Activated CD8-positive, alpha-beta T cell treated with anti-CD3 and anti-CD28 coated beads, Interleukin-2, amount 10 ng/mL, durations not matched to agents 7 days and 5 days (primary cell): ENCODE measurements at regions of chr21 and their contacts with region 1.

Region 1: GRCh38 chr21:42145569-42146272 is 73.2 kb upstream of the ABCG1 start:
- DNase-seq: peak; percentile 81
- ATAC-seq: peak; percentile 71
- H3K4me3 Mint-ChIP-seq: no peak overlapping the region
- H3K27ac Mint-ChIP-seq: peak overlapping the region; percentile 67
- H3K4me1 Mint-ChIP-seq: peaks cover 10% of the 10 kb centered on the region
- H3K27me3 Mint-ChIP-seq: peaks cover 8% of the 10 kb centered on the region

Region 2: DNA sequence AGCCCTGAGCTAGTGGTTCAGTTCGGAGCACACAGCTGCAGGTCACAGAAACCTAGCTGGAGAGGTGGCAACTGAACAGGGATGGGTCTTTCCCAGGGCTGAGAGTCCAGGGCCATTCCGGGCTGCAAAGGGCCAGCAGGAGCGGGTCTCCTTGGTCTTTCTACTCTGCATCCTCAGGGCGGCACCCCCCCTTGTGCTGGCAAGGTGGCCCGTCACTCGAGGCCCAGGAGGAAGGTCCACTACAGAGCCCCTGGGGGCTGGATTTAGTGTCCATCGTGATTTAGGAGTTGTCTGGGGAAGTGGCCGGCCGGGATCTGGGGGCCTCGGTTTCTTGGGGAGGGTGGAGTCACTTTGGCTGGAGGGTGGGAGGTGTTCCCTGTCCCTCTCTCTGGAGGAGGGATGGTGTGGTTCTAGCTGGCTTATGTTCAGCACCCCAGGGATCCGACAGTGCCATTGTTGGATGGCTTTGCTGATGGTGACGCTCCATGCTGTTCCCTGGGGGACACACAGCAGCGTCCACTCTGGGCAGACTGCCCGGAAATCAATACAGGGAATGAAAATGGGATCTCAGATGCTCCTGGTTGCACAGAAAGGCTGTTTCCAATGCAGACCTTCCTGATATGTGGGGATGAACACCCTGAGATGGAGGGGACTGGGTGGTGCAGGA is 10.2 kb before region 1 on chr21:
- CTCF ChIA-PET with region 1: interaction called, 13 read pairs
- POLR2A ChIA-PET with region 1: no interaction called
- DNase-seq: no peak
- ATAC-seq: no peak
- H3K4me3 Mint-ChIP-seq: no peak overlapping the region
- H3K27ac Mint-ChIP-seq: no peak overlapping the region
- H3K4me1 Mint-ChIP-seq: no peaks in the 10 kb centered on the region
- H3K27me3 Mint-ChIP-seq: no peaks in the 10 kb centered on the region

Region 3: DNA sequence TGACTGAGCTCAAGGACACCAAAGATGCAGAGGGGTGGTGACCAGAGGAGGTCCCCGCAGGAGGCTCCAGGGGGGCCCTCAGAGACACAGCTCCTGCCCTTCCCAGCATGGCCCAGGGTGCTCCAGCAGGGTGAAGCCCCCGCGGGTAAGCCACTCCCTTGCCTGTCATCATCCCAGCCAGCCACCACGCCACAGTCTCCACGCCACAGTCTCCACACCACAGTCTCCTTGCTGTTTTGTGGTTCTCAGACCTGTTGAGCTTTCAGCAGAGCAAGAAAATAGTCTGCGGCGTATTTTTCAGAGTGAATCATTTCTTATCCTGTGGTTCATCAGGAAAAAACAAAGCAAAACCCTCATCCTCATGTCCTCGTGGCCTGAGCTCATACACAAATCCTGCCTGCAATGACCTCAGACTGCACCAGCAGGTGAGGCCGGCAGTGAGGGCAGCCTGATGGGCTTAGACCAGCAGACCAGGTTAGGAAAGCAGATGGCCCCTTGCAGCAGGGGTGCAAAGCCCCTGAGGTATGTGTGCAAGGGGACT is 47.5 kb after region 1 on chr21:
- CTCF ChIA-PET with region 1: interaction called, 22 read pairs
- POLR2A ChIA-PET with region 1: no interaction called
- DNase-seq: peak; percentile 87
- ATAC-seq: peak; percentile 60
- H3K4me3 Mint-ChIP-seq: peak overlapping the region; percentile 16
- H3K27ac Mint-ChIP-seq: peak overlapping the region; percentile 71
- H3K4me1 Mint-ChIP-seq: peaks cover 77% of the 10 kb centered on the region
- H3K27me3 Mint-ChIP-seq: peaks cover 10% of the 10 kb centered on the region

Region 4: GRCh38 chr21:42233067-42233961 is 87.6 kb after region 1 on chr21:
- CTCF ChIA-PET with region 1: interaction called, 32 read pairs
- POLR2A ChIA-PET with region 1: interaction called, 3 read pairs
- DNase-seq: peak; percentile 84
- ATAC-seq: peak; percentile 55
- H3K4me3 Mint-ChIP-seq: peak overlapping the region; percentile 63
- H3K27ac Mint-ChIP-seq: peak overlapping the region; percentile 85
- H3K4me1 Mint-ChIP-seq: peaks cover 98% of the 10 kb centered on the region
- H3K27me3 Mint-ChIP-seq: no peaks in the 10 kb centered on the region

Region 5: DNA sequence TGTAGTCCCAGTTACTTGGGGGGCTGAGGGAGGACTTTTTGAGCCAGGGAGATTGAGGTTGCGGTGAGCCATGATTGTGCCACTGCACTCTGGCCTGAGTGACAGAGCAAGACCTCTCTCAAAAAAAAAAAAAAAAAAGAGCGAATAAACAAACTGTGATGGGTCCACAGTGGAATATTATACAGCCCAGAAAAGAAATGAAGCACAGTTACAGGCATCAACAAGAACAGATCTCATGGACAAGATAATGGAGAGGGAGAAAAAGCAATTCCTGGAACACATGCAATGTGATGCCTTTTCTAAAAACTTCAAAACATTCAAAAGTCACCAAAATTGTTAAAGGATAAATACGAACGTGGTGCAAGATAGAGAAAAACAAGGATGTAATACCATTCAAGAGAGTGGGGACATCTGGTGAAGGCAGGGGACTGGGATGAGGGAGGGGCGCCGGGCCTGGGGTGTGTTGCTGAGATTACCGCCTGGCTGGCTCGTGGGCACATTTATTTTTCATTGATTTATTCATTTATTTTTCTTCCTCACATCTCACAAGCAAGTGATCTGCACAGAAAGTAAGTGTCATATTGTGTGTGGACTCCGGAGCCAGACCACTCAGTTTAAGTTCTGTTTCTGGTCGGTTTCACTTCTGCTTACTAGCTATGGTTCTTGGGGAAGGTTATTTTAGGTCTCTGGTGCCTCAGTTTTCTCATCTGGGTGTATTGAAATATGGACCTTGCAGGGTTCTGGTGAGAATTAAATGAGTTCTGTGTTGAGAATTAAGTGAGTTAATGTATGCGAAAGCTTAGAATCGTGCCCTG is 103.3 kb after region 1 on chr21:
- CTCF ChIA-PET with region 1: interaction called, 11 read pairs
- POLR2A ChIA-PET with region 1: interaction called, 3 read pairs
- DNase-seq: no peak
- ATAC-seq: no peak
- H3K4me3 Mint-ChIP-seq: no peak overlapping the region
- H3K27ac Mint-ChIP-seq: no peak overlapping the region
- H3K4me1 Mint-ChIP-seq: peaks cover 8% of the 10 kb centered on the region
- H3K27me3 Mint-ChIP-seq: peaks cover 2% of the 10 kb centered on the region

Region 6: GRCh38 chr21:42309753-42310221 is 164.1 kb after region 1 on chr21:
- CTCF ChIA-PET with region 1: interaction called, 13 read pairs
- POLR2A ChIA-PET with region 1: no interaction called
- DNase-seq: peak; percentile 84
- ATAC-seq: peak; percentile 78
- H3K4me3 Mint-ChIP-seq: no peak overlapping the region
- H3K27ac Mint-ChIP-seq: no peak overlapping the region
- H3K4me1 Mint-ChIP-seq: peaks cover 16% of the 10 kb centered on the region
- H3K27me3 Mint-ChIP-seq: peaks cover 9% of the 10 kb centered on the region